ENCODE measurements at regions of chr5 and their contacts with region 1.

Region 1: DNA sequence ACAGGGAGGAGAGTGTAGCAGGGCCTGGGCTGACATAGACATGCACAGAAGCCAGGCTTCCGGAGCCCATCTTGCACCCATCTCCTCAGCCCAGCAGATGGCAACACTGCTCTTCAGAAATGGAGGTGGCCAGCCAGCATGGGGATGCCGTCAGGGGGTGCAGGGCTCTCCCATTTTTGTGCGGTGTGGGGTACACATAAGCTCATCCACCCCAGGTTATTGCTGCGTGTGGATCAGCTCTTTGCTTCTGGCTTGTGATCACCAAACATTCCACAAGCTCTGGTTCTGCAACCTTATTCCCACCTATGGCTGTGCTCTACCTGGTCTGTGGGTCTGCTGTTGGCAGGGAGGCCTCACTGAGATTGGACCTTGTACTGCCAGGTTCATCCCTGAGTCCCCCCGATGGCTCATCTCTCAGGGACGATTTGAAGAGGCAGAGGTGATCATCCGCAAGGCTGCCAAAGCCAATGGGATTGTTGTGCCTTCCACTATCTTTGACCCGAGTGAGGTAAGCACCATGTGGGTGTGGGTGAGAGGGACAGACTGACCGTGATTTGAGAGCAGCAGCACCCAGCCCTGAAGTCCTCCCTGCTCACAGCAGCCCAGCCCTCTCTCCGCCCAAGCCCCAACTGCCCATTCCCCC is 17.3 kb downstream of the SLC22A5 start:
- DNase-seq: peak; percentile 87
- ATAC-seq: peak; percentile 86
- H3K4me3 ChIP-seq: no peak overlapping the region
- H3K4me3 Mint-ChIP-seq: no peak overlapping the region
- H3K27ac ChIP-seq: no peak overlapping the region
- H3K27ac Mint-ChIP-seq: peak overlapping the region; percentile 43
- H3K4me1 ChIP-seq: peaks cover 15 to 18% of the 10 kb centered on the region in 2 donors
- H3K4me1 Mint-ChIP-seq: peaks cover 19% of the 10 kb centered on the region
- H3K27me3 ChIP-seq: no peaks in the 10 kb centered on the region
- H3K27me3 Mint-ChIP-seq: no peaks in the 10 kb centered on the region
- CTCF ChIP-seq: peak; percentile 83

Region 2: DNA sequence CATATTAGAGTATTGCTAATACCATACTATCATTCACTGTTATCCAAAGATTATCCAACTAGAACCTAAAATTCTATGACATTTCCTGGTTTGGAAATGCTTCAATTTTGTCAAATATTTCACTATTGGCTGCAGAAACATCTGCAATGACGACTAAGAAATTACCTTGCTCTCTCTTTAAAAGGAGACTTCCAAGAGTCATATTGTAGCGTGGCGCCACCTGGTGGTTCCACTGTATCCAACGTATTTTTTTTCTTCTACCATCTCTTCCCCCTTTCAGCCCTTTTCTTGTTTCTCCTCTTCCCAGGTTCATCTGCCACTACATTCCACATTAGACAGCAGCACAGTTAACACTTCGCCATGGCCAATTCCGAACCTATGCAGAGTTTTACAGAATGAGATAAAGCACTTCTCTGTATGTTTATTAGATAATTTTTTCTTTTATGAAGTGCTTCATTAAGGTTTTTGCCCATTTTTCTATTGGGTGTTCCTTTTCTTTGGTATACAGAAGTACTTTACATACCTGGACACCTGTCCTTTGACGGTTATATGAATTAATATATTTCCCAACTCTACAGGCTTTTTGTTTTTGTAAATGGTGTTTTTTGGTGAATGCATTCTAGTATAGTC is 969.4 kb before region 1 on chr5:
- CTCF ChIA-PET with region 1: no interaction called
- POLR2A ChIA-PET with region 1: no interaction called
- intact Hi-C with region 1: no loop called
- DNase-seq: peak; percentile 82
- ATAC-seq: peak; percentile 63
- H3K4me3 ChIP-seq: peak overlapping the region in 1 of 5 experiments; percentile 43
- H3K4me3 Mint-ChIP-seq: peak overlapping the region; percentile 54
- H3K27ac ChIP-seq: no peak overlapping the region
- H3K27ac Mint-ChIP-seq: no peak overlapping the region
- H3K4me1 ChIP-seq: peaks cover 18 to 19% of the 10 kb centered on the region in 2 donors
- H3K4me1 Mint-ChIP-seq: peaks cover 32% of the 10 kb centered on the region
- H3K27me3 ChIP-seq: no peaks in the 10 kb centered on the region
- H3K27me3 Mint-ChIP-seq: no peaks in the 10 kb centered on the region
- CTCF ChIP-seq: peak; percentile 97

Region 3: DNA sequence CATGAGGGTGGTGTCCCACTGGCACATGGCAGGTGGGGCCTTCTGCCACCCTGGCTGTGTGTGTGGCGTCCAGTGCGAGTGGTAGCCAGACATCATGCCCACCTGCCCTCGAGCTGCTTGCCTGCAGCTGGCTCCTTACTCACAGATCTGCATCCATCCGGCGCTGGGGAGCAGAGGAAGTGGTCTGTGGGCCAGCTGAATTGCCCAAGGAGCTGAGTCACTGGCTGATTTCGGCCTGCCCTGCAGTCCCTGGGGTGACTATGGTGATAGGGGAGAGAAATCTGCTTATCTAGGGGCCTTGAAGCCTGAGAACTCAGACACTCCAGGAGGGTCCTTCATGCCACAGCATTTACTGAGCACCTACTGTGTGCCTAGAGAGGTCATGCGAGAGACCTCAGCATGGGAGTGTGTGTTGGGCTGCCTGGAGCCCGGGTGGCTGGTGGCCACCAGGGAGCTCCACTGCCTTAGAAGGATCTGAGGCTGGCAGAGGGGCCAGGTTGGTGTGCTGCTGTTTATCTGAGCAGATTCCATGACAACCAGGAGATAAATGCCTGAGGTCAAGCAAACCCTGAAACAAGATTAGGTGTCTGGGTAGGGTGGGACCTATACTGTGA is 39.9 kb after region 1 on chr5:
- CTCF ChIA-PET with region 1: interaction called, 22 read pairs
- POLR2A ChIA-PET with region 1: interaction called, 3 read pairs
- intact Hi-C with region 1: no loop called
- DNase-seq: peak; percentile 64
- ATAC-seq: peak; percentile 41
- H3K4me3 ChIP-seq: peak overlapping the region in 2 of 5 experiments; percentile 8 to 56
- H3K4me3 Mint-ChIP-seq: peak overlapping the region; percentile 80
- H3K27ac ChIP-seq: peak overlapping the region; percentile 90 to 94
- H3K27ac Mint-ChIP-seq: peak overlapping the region; percentile 93
- H3K4me1 ChIP-seq: peaks cover 99 to 100% of the 10 kb centered on the region in 2 donors
- H3K4me1 Mint-ChIP-seq: peaks cover 97% of the 10 kb centered on the region
- H3K27me3 ChIP-seq: no peaks in the 10 kb centered on the region
- H3K27me3 Mint-ChIP-seq: no peaks in the 10 kb centered on the region
- CTCF ChIP-seq: no peak

Region 4: DNA sequence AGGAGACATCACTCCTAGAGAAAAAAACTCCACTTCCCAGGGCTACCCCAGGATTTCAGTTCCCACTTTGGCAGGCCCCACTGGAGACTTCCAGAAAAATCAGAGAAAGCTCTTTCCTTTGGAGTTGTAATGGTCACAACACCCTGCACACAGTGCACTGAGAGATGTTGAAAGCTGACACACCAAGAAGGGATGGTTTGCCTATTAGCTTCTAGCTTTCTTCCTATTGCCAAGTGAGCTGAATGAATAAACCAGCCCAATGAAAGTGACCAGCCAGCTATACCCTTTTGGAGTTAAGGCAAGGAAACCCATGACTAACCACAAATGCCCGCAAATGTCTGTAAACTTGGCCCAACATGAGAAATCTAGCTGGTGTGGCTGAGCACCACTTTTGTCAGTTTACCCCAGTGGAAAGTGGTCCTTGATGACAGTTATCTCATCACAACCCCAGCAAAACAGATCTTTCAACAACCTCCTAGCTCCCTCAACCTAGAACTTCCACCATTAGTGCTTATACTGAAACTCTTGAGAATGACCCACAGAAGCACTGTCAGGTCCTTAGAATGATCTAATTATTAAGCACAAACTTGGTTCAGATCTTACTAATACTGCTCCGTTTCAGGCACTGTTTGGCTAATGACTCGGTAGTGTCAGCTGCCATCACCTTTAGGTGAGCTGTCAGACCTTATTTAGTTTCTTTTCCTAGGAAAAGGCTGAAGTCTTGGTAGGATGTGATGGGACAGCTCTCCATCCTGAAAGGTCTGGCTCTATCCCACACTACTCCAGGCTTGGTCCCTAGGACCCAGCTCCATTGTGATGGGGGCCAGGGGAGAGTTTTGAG is 92.6 kb after region 1 on chr5:
- CTCF ChIA-PET with region 1: interaction called, 13 read pairs
- POLR2A ChIA-PET with region 1: interaction called, 4 read pairs
- intact Hi-C with region 1: no loop called
- DNase-seq: peak; percentile 37
- ATAC-seq: no peak
- H3K4me3 ChIP-seq: no peak overlapping the region
- H3K4me3 Mint-ChIP-seq: peak overlapping the region; percentile 58
- H3K27ac ChIP-seq: peak overlapping the region; percentile 6 to 56
- H3K27ac Mint-ChIP-seq: peak overlapping the region; percentile 99
- H3K4me1 ChIP-seq: peaks cover 30 to 64% of the 10 kb centered on the region in 2 donors
- H3K4me1 Mint-ChIP-seq: peaks cover 77% of the 10 kb centered on the region
- H3K27me3 ChIP-seq: no peaks in the 10 kb centered on the region
- H3K27me3 Mint-ChIP-seq: no peaks in the 10 kb centered on the region
- CTCF ChIP-seq: no peak

Region 5: GRCh38 chr5:132500931-132501630 is 114.3 kb after region 1 on chr5:
- CTCF ChIA-PET with region 1: interaction called, 528 read pairs
- POLR2A ChIA-PET with region 1: interaction called, 15 read pairs
- intact Hi-C with region 1: loop called (anchors 1 kb)
- DNase-seq: peak; percentile 92
- ATAC-seq: peak; percentile 53
- H3K4me3 ChIP-seq: no peak overlapping the region
- H3K4me3 Mint-ChIP-seq: no peak overlapping the region
- H3K27ac ChIP-seq: peak overlapping the region; percentile 78 to 85
- H3K27ac Mint-ChIP-seq: peak overlapping the region; percentile 97
- H3K4me1 ChIP-seq: peaks cover 19 to 27% of the 10 kb centered on the region in 2 donors
- H3K4me1 Mint-ChIP-seq: peaks cover 37% of the 10 kb centered on the region
- H3K27me3 ChIP-seq: no peaks in the 10 kb centered on the region
- H3K27me3 Mint-ChIP-seq: no peaks in the 10 kb centered on the region
- CTCF ChIP-seq: peak; percentile 90

Region 6: GRCh38 chr5:132714456-132715307 is 327.9 kb after region 1 on chr5:
- CTCF ChIA-PET with region 1: interaction called, 6 read pairs
- POLR2A ChIA-PET with region 1: no interaction called
- intact Hi-C with region 1: loop called (anchors 1 kb)
- DNase-seq: peak; percentile 19
- ATAC-seq: no peak
- H3K4me3 ChIP-seq: no peak overlapping the region
- H3K4me3 Mint-ChIP-seq: no peak overlapping the region
- H3K27ac ChIP-seq: no peak overlapping the region
- H3K27ac Mint-ChIP-seq: no peak overlapping the region
- H3K4me1 ChIP-seq: no peaks in the 10 kb centered on the region
- H3K4me1 Mint-ChIP-seq: no peaks in the 10 kb centered on the region
- H3K27me3 ChIP-seq: no peaks in the 10 kb centered on the region
- H3K27me3 Mint-ChIP-seq: no peaks in the 10 kb centered on the region
- CTCF ChIP-seq: peak; percentile 73

Region 7: GRCh38 chr5:132866342-132867045 is 479.7 kb after region 1 on chr5 and contains the starts of genes GDF9 and UQCRQ:
- CTCF ChIA-PET with region 1: no interaction called
- POLR2A ChIA-PET with region 1: no interaction called
- intact Hi-C with region 1: loop called (anchors 5 kb)
- DNase-seq: peak; percentile 97
- ATAC-seq: peak; percentile 99
- H3K4me3 ChIP-seq: peak within 1 kb of the TSS; percentile 67 to 93 (median 81)
- H3K4me3 Mint-ChIP-seq: peak within 1 kb of the TSS; percentile 93
- H3K27ac ChIP-seq: peak within 1 kb of the TSS; percentile 92 to 93
- H3K27ac Mint-ChIP-seq: peak within 1 kb of the TSS; percentile 98
- H3K4me1 ChIP-seq: peaks cover 16 to 19% of the 10 kb centered on the region in 2 donors
- H3K4me1 Mint-ChIP-seq: peaks cover 26% of the 10 kb centered on the region
- H3K27me3 ChIP-seq: no peaks in the 10 kb centered on the region
- H3K27me3 Mint-ChIP-seq: no peaks in the 10 kb centered on the region
- CTCF ChIP-seq: no peak
- total RNA-seq, gene GDF9: 0.51 and 0.67 TPM in 2 replicates
- total RNA-seq, gene UQCRQ: 78.5 and 90.0 TPM in 2 replicates